Activated T-helper 2 cell treated with anti-CD3 and anti-CD28 coated beads, Interferon-gamma antibody, Interleukin-2, Interleukin-4, amounts not matched to agents 10 μg/mL and 5 μg/mL and 100 μg/mL, durations not matched to agents 14 hours and 24 hours and 36 hours (primary cell): ENCODE measurements at regions of chr2 and their contacts with region 1.

Region 1: GRCh38 chr2:39216346-39217191 is 27.2 kb downstream of the CDKL4 start:
- DNase-seq: peak; percentile 87
- H3K4me3 Mint-ChIP-seq: peak overlapping the region; percentile 38
- H3K27ac Mint-ChIP-seq: peak overlapping the region; percentile 88
- H3K4me1 Mint-ChIP-seq: peaks cover 64% of the 10 kb centered on the region
- H3K27me3 Mint-ChIP-seq: no peaks in the 10 kb centered on the region

Region 2: GRCh38 chr2:39099870-39100728 is 116.5 kb before region 1 on chr2:
- intact Hi-C with region 1: loop called (anchors 1 kb)
- DNase-seq: no peak
- H3K4me3 Mint-ChIP-seq: no peak overlapping the region
- H3K27ac Mint-ChIP-seq: peak overlapping the region; percentile 76
- H3K4me1 Mint-ChIP-seq: peaks cover 60% of the 10 kb centered on the region
- H3K27me3 Mint-ChIP-seq: no peaks in the 10 kb centered on the region